ENCODE measurements at regions of chr22 and their contacts with region 1.

Region 1: GRCh38 chr22:23385291-23386244 is 194.5 kb downstream of the IGLL1 start:
- DNase-seq: peak; percentile 79 to 89
- H3K4me3 ChIP-seq: no peak overlapping the region
- H3K4me3 Mint-ChIP-seq: no peak overlapping the region
- H3K27ac Mint-ChIP-seq: no peak overlapping the region
- H3K4me1 ChIP-seq: peaks cover 6% of the 10 kb centered on the region; the same call in 1 of the 2 replicates
- H3K4me1 Mint-ChIP-seq: no peaks in the 10 kb centered on the region
- H3K27me3 ChIP-seq: no peaks in the 10 kb centered on the region
- H3K27me3 Mint-ChIP-seq: peaks cover 5% of the 10 kb centered on the region
- CTCF ChIP-seq: peak; percentile 94 to 97

Region 2: DNA sequence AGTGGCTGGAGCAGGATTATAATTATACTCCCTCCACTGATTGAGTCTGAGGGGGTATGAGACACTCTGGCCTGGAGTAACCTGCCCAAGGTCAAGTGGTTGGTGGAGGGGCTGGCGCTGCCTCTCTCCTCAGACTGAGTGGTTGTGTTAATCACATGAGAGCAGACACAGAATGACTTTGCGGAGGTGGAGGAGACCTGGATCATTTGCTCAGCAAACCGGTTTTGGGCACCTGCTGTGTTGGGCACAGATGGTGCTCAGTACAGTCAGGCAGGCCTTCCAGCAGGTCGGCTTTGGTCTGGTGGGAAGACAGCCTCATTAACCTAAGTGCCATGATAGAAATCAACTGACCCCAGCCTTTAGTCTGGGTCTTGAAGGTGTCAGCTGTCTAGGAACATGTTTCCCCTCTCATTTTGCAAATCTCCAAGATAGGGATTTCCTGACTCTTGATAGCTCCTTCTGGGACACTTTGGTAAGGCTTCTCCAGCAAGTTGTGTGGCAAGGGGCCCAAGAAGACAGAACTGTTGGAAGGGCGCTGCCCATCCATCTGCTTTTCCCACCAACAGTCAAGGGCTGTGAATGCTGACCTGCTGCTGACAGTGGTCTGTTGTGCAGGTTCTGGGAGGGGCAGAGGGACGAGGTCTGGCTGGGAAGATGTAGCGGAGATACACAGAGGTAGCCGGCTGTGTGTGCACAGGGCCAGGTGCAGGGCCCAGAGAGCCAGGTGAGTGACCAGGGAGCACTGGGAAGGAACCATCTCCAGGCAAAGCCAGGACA is 193.2 kb before region 1 on chr22:
- CTCF ChIA-PET with region 1: no interaction called
- POLR2A ChIA-PET with region 1: no interaction called
- intact Hi-C with region 1: no loop called
- DNase-seq: no peak
- H3K4me3 ChIP-seq: no peak overlapping the region
- H3K4me3 Mint-ChIP-seq: no peak overlapping the region
- H3K27ac Mint-ChIP-seq: no peak overlapping the region
- H3K4me1 ChIP-seq: no peaks in the 10 kb centered on the region
- H3K4me1 Mint-ChIP-seq: peaks cover 16% of the 10 kb centered on the region
- H3K27me3 ChIP-seq: no peaks in the 10 kb centered on the region
- H3K27me3 Mint-ChIP-seq: no peaks in the 10 kb centered on the region
- CTCF ChIP-seq: no peak

Region 3: DNA sequence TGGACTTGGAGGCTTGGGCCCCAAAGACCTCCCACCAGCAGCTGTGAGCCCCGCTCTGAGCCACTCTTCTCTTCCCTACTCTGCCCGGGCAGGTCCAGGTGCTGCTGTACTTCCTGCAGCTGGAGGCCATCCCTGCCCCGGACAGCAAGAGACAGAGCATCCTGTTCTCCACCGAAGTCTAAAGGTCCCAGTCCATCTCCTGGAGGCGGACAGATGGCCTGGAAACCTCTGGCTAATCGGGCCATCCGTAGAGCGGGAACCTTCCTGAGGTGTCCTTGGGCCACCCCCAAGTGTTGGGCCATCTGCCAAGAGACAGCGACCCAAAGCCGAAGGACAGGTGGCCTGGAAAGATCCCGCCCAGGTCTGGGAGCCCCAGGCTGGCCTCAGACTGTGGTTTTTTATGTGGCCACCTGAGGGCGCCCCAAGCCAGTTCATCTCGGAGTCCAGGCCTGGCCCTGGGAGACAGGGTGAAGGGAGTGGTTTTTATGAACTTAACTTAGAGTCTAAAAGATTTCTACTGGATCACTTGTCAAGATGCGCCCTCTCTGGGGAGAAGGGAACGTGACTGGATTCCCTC is 70.1 kb before region 1 on chr22:
- CTCF ChIA-PET with region 1: interaction called, 5 read pairs
- POLR2A ChIA-PET with region 1: no interaction called
- intact Hi-C with region 1: loop called (anchors 2 kb)
- DNase-seq: peak; percentile 55 to 77
- H3K4me3 ChIP-seq: no peak overlapping the region
- H3K4me3 Mint-ChIP-seq: no peak overlapping the region
- H3K27ac Mint-ChIP-seq: no peak overlapping the region
- H3K4me1 ChIP-seq: no peaks in the 10 kb centered on the region
- H3K4me1 Mint-ChIP-seq: no peaks in the 10 kb centered on the region
- H3K27me3 ChIP-seq: no peaks in the 10 kb centered on the region
- H3K27me3 Mint-ChIP-seq: no peaks in the 10 kb centered on the region
- CTCF ChIP-seq: peak; percentile 17 to 56

Region 4: GRCh38 chr22:23353004-23353403 is 32.6 kb before region 1 on chr22:
- CTCF ChIA-PET with region 1: no interaction called
- POLR2A ChIA-PET with region 1: no interaction called
- intact Hi-C with region 1: no loop called
- DNase-seq: no peak
- H3K4me3 ChIP-seq: no peak overlapping the region
- H3K4me3 Mint-ChIP-seq: no peak overlapping the region
- H3K27ac Mint-ChIP-seq: no peak overlapping the region
- H3K4me1 ChIP-seq: no peaks in the 10 kb centered on the region
- H3K4me1 Mint-ChIP-seq: no peaks in the 10 kb centered on the region
- H3K27me3 ChIP-seq: no peaks in the 10 kb centered on the region
- H3K27me3 Mint-ChIP-seq: peaks cover 23% of the 10 kb centered on the region
- CTCF ChIP-seq: no peak

Measured in Caco-2 (cell line).